K562 (cell line): ENCODE measurements at regions of chr14 and their contacts with region 1.

Region 1: GRCh38 chr14:88667555-88668273 is 104.9 kb downstream of the ZC3H14 start:
- DNase-seq: peak; percentile 25 to 72 (median 38)
- ATAC-seq: peak; percentile 90
- H3K4me3 ChIP-seq: no peak overlapping the region
- H3K27ac ChIP-seq: no peak overlapping the region
- H3K4me1 ChIP-seq: no peaks in the 10 kb centered on the region; a peak in 1 of 5 replicates
- H3K27me3 ChIP-seq: no peaks in the 10 kb centered on the region
- CTCF ChIP-seq: peak; percentile 70 to 75 (median 74)
- EP300 ChIP-seq: no peak
- POLR2A ChIP-seq: no peak
- RAD21 ChIP-seq: peak; percentile 74 to 80

Region 2: DNA sequence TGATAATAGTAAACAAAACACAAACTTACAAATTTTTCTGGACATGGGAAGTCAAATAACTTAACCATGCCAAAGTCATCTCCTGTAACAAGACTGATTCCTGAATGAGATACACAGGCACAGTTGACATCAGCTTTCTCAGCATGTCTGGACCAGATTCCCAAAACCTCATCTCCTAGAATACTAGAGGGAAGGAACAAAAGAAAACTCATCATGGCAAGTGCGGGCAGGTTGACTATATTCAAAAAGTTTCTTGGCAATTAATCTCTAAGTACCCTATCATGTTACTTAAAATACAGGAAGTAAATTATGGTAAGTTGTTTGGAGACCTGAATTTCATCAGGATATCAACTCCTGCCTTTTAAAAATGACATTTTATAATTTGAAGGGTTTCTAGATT is 51.0 kb before region 1 on chr14:
- CTCF ChIA-PET with region 1: no interaction called
- POLR2A ChIA-PET with region 1: no interaction called
- in situ Hi-C with region 1: no loop called
- intact Hi-C with region 1: no loop called
- DNase-seq: no peak
- ATAC-seq: no peak
- H3K4me3 ChIP-seq: no peak overlapping the region
- H3K27ac ChIP-seq: no peak overlapping the region
- H3K4me1 ChIP-seq: no peaks in the 10 kb centered on the region
- H3K27me3 ChIP-seq: no peaks in the 10 kb centered on the region
- CTCF ChIP-seq: no peak
- EP300 ChIP-seq: no peak
- POLR2A ChIP-seq: no peak
- RAD21 ChIP-seq: no peak

Region 3: GRCh38 chr14:88688386-88688785 is 20.7 kb after region 1 on chr14:
- CTCF ChIA-PET with region 1: no interaction called
- POLR2A ChIA-PET with region 1: no interaction called
- in situ Hi-C with region 1: no loop called
- intact Hi-C with region 1: no loop called
- DNase-seq: no peak
- ATAC-seq: no peak
- H3K4me3 ChIP-seq: no peak overlapping the region
- H3K27ac ChIP-seq: no peak overlapping the region
- H3K4me1 ChIP-seq: no peaks in the 10 kb centered on the region
- H3K27me3 ChIP-seq: no peaks in the 10 kb centered on the region
- CTCF ChIP-seq: no peak
- EP300 ChIP-seq: no peak
- POLR2A ChIP-seq: no peak
- RAD21 ChIP-seq: no peak

Region 4: DNA sequence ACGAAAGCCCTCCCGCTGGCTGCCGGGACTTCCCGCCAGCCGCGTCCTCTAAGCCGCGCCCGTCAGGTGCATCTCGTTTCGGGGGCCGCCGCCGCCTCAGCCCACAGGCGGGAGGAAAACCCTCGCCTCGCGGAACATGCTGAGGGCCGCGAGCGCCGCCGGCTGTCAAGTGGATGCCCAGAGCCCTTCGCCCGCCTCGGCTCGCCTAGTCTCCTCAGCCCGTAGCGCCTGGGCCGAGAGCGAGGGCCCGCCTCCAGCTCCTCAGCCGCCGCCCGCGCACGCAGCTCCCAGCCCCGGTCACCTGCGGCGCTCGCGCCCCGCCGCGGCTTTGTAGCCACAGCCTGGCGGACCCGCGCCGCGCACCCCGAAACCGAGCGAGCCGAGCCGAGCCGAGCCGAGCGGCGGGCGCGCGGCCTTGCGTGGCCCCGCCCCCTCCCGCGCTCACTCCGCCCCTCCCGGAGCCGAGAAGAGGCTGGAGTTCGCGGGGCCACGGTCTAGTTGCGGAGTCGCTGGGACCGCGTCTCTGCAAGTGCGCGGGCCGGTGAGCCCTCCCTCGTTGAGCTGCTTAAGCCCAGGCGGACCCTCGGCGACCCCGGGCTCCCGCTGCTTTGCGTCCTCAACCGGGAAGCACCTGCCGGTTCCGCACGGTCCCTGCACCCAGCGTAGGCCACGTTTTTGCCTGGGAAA is 125.0 kb after region 1 on chr14 and contains the start of gene EML5:
- CTCF ChIA-PET with region 1: no interaction called
- POLR2A ChIA-PET with region 1: no interaction called
- in situ Hi-C with region 1: no loop called
- intact Hi-C with region 1: loop called (anchors 2 kb)
- DNase-seq: peak; percentile 69 to 84 (median 72)
- ATAC-seq: peak; percentile 99
- H3K4me3 ChIP-seq: peak within 1 kb of the TSS; percentile 48
- H3K27ac ChIP-seq: no peak within 1 kb of the TSS
- H3K4me1 ChIP-seq: peaks cover 5 to 16% of the 10 kb centered on the region in 2 experiments; a peak in 4 of 5 replicates
- H3K27me3 ChIP-seq: peaks cover 2 to 4% of the 10 kb centered on the region in 2 experiments; a peak in 2 of 5 replicates
- CTCF ChIP-seq: peak in 2 of 3 experiments; percentile 44 to 45; a peak in 3 of 6 replicates
- EP300 ChIP-seq: no peak
- POLR2A ChIP-seq: 0 out of 2 replicates have a peak, but pooled peaks have one; percentile 45
- RAD21 ChIP-seq: peak; percentile 47 to 56; a peak in 3 of 4 replicates
- polyA plus RNA-seq, gene EML5: 0.06 to 0.08 TPM

Region 5: GRCh38 chr14:88868558-88869159 is 200.9 kb after region 1 on chr14:
- CTCF ChIA-PET with region 1: interaction called, 12 read pairs
- POLR2A ChIA-PET with region 1: no interaction called
- in situ Hi-C with region 1: loop called (anchors 10 kb)
- intact Hi-C with region 1: loop called (anchors 1 kb)
- DNase-seq: peak in 2 of 4 experiments; percentile 5 to 27
- ATAC-seq: peak; percentile 75
- H3K4me3 ChIP-seq: no peak overlapping the region
- H3K27ac ChIP-seq: no peak overlapping the region
- H3K4me1 ChIP-seq: no peaks in the 10 kb centered on the region
- H3K27me3 ChIP-seq: no peaks in the 10 kb centered on the region
- CTCF ChIP-seq: peak; percentile 22 to 63 (median 32); a peak in 3 of 6 replicates
- EP300 ChIP-seq: no peak
- POLR2A ChIP-seq: no peak
- RAD21 ChIP-seq: peak; percentile 52 to 75

Region 6: GRCh38 chr14:88879022-88879421 is 211.3 kb after region 1 on chr14:
- CTCF ChIA-PET with region 1: no interaction called
- POLR2A ChIA-PET with region 1: no interaction called
- in situ Hi-C with region 1: loop called (anchors 10 kb)
- intact Hi-C with region 1: no loop called
- DNase-seq: peak in 1 of 4 experiments; percentile 2
- ATAC-seq: no peak
- H3K4me3 ChIP-seq: no peak overlapping the region
- H3K27ac ChIP-seq: no peak overlapping the region
- H3K4me1 ChIP-seq: no peaks in the 10 kb centered on the region
- H3K27me3 ChIP-seq: no peaks in the 10 kb centered on the region
- CTCF ChIP-seq: no peak
- EP300 ChIP-seq: no peak
- POLR2A ChIP-seq: no peak
- RAD21 ChIP-seq: no peak

Region 7: GRCh38 chr14:89000007-89000942 is 332.6 kb after region 1 on chr14:
- CTCF ChIA-PET with region 1: no interaction called
- POLR2A ChIA-PET with region 1: no interaction called
- in situ Hi-C with region 1: loop called (anchors 25 kb)
- intact Hi-C with region 1: no loop called
- DNase-seq: peak; percentile 48 to 73 (median 54)
- ATAC-seq: peak; percentile 92
- H3K4me3 ChIP-seq: no peak overlapping the region
- H3K27ac ChIP-seq: no peak overlapping the region; the same call in 2 of the 3 replicates
- H3K4me1 ChIP-seq: peaks cover 0 to 10% of the 10 kb centered on the region in 2 experiments; a peak in 3 of 5 replicates
- H3K27me3 ChIP-seq: no peaks in the 10 kb centered on the region
- CTCF ChIP-seq: no peak
- EP300 ChIP-seq: peak; percentile 69
- POLR2A ChIP-seq: no peak
- RAD21 ChIP-seq: no peak